ACHN (cell line): ENCODE measurements at regions of chr6 and their contacts with region 1.

Region 1: DNA sequence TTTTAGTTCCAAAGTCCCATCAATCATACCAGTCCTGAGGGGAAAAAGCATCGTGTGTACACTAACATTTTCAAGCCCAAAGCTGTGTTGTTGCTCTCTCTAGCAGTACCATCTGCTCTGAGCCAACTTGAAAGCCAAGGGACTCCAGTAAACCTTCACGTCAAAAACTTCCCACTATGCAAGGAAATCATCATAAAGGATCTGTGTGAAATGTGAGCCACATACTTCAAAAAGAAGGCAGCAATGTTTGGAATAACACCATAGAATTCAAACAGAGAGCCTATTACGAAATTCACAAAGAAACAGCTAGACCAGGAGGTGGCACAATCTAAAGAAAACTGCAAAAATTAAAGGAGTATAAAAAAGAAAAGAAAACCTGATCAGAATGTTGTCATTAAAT is 399.8 kb upstream of the EPHA7 start:
- DNase-seq: peak; percentile 18

Region 2: DNA sequence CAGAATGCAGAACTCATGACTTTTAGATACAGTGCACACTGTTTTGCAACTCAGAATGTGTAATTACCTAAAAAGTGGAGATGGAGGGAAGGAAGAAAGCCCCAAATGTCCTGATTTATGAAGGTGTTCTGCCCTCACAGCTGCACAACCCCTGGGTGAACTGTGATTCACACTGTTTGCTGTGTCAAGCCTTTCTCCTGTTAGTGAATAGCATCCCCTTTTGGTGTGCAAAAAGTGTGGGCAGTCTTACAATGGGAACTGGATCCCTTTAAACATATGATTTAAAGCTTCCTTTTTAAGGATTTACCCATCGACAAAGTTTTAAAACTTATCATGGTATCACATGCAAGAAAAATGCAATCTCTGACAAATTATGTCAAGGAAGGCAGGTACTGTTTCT is 233.6 kb after region 1 on chr6:
- in situ Hi-C with region 1: loop called (anchors 25 kb)
- DNase-seq: peak; percentile 53